Psoas muscle (tissue), 8 donors: ENCODE measurements at regions of chr17 and their contacts with region 1.

Region 1: GRCh38 chr17:82443463-82444302 is 6.9 kb downstream of the CYBC1 start:
- DNase-seq: no peak
- ATAC-seq: peak in 1 of 4 donors; percentile 6
- H3K4me3 ChIP-seq: no peak overlapping the region
- H3K27ac ChIP-seq: no peak overlapping the region
- H3K4me1 ChIP-seq: peaks cover 7% of the 10 kb centered on the region
- H3K27me3 ChIP-seq: no peaks in the 10 kb centered on the region
- CTCF ChIP-seq: no peak

Region 2: GRCh38 chr17:82370471-82371332 is 73.0 kb before region 1 on chr17:
- intact Hi-C with region 1: no loop called
- DNase-seq: peak in 1 of 2 donors; percentile 52
- ATAC-seq: peak in 3 of 4 donors; percentile 20 to 34 (median 28)
- H3K4me3 ChIP-seq: peak overlapping the region; percentile 62
- H3K27ac ChIP-seq: no peak overlapping the region
- H3K4me1 ChIP-seq: peaks cover 12% of the 10 kb centered on the region
- H3K27me3 ChIP-seq: peaks cover 0 to 65% (median 26%) of the 10 kb centered on the region in 3 donors
- CTCF ChIP-seq: no peak

Region 3: DNA sequence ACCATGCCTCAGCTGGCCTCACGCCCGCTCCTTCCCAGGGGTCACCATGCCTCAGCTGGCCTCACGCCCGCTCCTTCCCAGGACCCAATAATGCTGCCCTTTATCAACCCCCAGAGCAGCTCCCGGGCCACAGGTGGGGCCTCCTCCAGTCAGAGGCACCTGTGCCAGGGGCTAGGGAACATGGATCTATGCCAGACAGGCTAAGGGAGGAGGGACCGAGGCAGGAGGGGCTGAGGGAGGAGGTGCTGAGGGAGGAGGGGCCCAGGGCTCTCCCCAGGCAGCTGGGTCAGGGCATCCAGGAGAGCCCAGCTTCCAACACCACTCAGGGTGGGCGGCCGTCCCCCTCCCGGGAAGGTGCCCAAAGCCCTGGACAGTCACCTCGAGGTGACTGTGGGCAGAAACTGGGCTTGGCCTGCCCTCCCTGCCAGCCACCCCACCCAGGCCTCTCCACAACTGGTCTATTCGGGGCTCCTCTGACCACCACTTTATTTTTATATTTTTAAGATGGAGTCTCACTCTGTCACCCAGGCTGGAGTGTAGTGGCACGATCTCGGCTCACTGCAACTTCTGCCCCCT is 52.7 kb before region 1 on chr17:
- intact Hi-C with region 1: loop called in 1 of 2 experiments (anchors 1 kb)
- DNase-seq: no peak
- ATAC-seq: no peak
- H3K4me3 ChIP-seq: no peak overlapping the region
- H3K27ac ChIP-seq: no peak overlapping the region
- H3K4me1 ChIP-seq: peaks cover 4% of the 10 kb centered on the region
- H3K27me3 ChIP-seq: peaks cover 0 to 5% (median 0%) of the 10 kb centered on the region in 3 donors
- CTCF ChIP-seq: no peak